ENCODE measurements at regions of chr17 and their contacts with region 1.

Region 1: GRCh38 chr17:44775136-44775837 is 16.5 kb downstream of the ADAM11 start:
- DNase-seq: peak; percentile 91 to 98
- H3K4me3 ChIP-seq: peak overlapping the region; percentile 54 to 73
- H3K27ac ChIP-seq: peak overlapping the region in 1 of 2 donors; percentile 1
- H3K4me1 ChIP-seq: peaks cover 10 to 14% of the 10 kb centered on the region in 2 donors
- H3K27me3 ChIP-seq: no peaks in the 10 kb centered on the region
- CTCF ChIP-seq: no peak

Region 2: GRCh38 chr17:44385287-44386181 is 389.8 kb before region 1 on chr17:
- intact Hi-C with region 1: no loop called
- DNase-seq: peak; percentile 39 to 85
- H3K4me3 ChIP-seq: peak overlapping the region; percentile 47 to 66
- H3K27ac ChIP-seq: no peak overlapping the region
- H3K4me1 ChIP-seq: peaks cover 0 to 11% of the 10 kb centered on the region in 2 donors
- H3K27me3 ChIP-seq: no peaks in the 10 kb centered on the region
- CTCF ChIP-seq: peak in 1 of 3 experiments; percentile 15

Region 3: DNA sequence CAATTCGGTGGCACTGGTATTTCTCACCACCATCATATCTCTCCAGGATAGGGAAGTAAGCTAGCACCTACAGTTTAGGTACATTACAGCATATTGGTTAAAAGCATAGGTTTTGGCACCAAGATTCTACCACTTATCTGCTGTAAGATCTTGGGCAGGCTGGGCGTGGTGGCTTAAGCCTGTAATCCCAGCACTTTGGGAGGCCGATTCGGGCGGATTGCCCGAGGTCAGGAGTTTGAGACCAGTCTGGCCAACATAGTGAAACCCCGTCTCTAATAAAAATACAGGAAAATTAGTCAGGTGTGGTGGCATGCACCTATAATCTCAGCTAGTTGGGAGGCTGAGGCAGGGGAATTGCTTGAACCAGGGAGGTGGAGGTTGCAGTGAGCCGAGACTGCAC is 323.5 kb before region 1 on chr17:
- intact Hi-C with region 1: no loop called
- DNase-seq: no peak
- H3K4me3 ChIP-seq: no peak overlapping the region
- H3K27ac ChIP-seq: no peak overlapping the region
- H3K4me1 ChIP-seq: no peaks in the 10 kb centered on the region
- H3K27me3 ChIP-seq: no peaks in the 10 kb centered on the region
- CTCF ChIP-seq: no peak

Region 4: GRCh38 chr17:44829523-44830358 is 54.5 kb after region 1 on chr17 and contains the start of gene GJC1:
- intact Hi-C with region 1: loop called (anchors 2 kb)
- DNase-seq: no peak
- H3K4me3 ChIP-seq: peak within 1 kb of the TSS; percentile 79 to 86
- H3K27ac ChIP-seq: peak within 1 kb of the TSS; percentile 62 to 85
- H3K4me1 ChIP-seq: peaks cover 2 to 4% of the 10 kb centered on the region in 2 donors
- H3K27me3 ChIP-seq: peaks cover 7% of the 10 kb centered on the region
- CTCF ChIP-seq: no peak
- total RNA-seq, gene GJC1: 9.9 TPM

Region 5: DNA sequence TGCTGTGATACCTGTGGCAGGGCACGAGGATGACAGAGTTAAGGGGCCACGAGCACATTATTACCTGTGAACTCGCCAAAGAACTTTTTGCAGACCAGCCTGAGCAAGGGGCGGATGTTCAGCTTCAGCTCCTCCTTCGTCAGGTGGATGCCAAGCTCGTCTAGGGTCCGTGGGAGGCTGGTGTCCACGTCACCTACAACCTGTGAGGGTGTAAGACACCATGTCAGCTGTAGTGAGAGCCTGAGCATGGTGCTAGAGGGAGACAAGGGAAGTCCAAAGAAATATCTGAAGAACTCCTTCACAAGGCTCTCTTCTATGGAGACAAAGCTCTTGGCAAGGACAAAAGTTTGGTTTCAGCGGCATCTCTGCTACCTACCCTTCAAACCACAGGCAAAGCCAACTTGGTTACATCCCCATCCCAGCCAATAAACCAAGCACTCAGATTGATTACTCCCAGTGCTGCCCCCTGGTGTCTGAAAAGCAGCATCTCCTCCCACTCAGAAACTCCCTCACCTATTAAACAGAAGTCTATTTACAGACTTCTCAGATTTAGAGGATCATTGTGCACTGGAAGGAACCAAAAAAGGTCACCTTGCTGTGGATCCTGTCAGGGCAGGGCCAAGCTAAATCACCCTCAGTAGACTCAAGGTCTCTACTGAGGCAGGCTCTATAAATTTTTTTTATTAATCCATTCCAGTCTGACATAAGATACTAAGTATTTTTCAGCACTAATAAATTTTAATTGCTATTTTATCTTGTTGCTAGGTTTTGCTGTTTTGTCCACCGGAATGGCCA is 89.8 kb after region 1 on chr17:
- intact Hi-C with region 1: loop called (anchors 1 kb)
- DNase-seq: peak in 1 of 2 donors; percentile 75
- H3K4me3 ChIP-seq: no peak overlapping the region
- H3K27ac ChIP-seq: no peak overlapping the region
- H3K4me1 ChIP-seq: no peaks in the 10 kb centered on the region
- H3K27me3 ChIP-seq: no peaks in the 10 kb centered on the region
- CTCF ChIP-seq: peak; percentile 84 to 88 (median 84)

Region 6: GRCh38 chr17:44878627-44879221 is 103.4 kb after region 1 on chr17:
- intact Hi-C with region 1: loop called (anchors 1 kb)
- DNase-seq: no peak
- H3K4me3 ChIP-seq: no peak overlapping the region
- H3K27ac ChIP-seq: no peak overlapping the region
- H3K4me1 ChIP-seq: no peaks in the 10 kb centered on the region
- H3K27me3 ChIP-seq: no peaks in the 10 kb centered on the region
- CTCF ChIP-seq: peak; percentile 21 to 63 (median 29)

Region 7: DNA sequence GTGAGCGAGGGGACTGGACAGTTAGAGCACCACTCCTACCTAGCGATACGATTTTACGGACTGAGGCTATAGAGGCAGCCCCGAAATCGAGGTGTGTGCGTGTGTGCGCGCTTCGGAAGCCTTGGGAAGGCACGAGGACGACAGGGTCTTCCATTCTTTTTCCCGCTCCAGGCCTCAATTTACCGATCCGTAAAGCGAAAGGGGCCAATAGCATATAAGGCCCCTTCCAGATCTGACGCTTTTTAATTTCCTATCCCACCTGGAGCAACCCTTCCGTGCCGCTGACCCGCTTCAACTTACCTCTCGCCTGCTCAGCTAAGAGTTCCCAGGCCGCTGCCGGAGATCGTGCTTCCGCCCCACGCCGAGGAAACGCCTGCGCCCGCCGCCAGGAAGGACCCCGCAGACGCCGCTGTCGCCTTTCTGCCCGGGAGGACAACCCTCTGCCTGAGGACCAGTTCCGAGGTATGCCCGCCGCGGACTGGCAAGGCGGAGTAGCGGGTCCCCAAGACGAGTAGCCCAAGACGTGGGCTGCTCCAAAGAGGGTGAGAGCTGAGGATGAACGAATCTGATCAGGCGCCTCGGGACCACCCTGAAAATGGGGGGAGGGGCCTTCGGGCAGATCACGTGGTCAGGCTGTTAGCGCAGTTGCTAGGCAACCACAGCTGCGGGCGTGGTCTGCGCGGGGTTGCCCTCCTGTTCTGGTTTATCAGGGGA is 123.9 kb after region 1 on chr17 and contains the start of gene EFTUD2:
- intact Hi-C with region 1: loop called (anchors 1 kb)
- DNase-seq: peak; percentile 57 to 94
- H3K4me3 ChIP-seq: peak within 1 kb of the TSS; percentile 75 to 76
- H3K27ac ChIP-seq: peak within 1 kb of the TSS; percentile 89 to 96
- H3K4me1 ChIP-seq: peaks cover 0 to 15% of the 10 kb centered on the region in 2 donors
- H3K27me3 ChIP-seq: no peaks in the 10 kb centered on the region
- CTCF ChIP-seq: no peak
- total RNA-seq, gene EFTUD2: 126 TPM

Measured in ascending aorta (tissue), 2 donors.